Aorta (tissue), 5 donors: ENCODE measurements at regions of chr1 and their contacts with region 1.

Region 1: DNA sequence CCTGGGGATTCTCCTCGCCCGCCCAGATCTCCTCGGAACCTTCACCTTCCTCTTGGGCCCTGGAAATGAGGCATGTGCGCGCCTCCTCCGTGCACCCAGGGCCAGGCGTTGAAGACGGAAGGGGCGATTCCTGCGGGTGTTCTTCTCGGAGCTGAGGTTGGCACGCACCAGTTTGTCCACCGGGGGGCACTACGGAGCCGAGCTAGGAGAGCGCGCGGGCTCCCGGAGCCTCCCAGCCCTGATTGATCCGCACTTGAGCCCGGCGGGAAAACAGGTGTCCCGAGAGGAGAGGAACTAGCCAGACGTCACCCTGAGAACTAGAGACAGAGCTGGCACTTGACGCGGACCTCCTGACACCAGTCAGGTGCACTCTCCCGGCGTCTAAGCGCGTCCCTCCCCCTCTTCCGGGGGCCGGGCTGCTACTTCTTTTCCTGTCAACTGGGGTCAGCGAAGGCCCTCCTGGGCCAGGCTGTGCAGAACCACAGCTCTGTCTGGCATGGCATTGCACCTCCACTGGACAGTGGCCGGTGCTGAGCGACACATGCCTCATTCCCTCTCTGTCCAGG is 18.3 kb upstream of the SERINC2 start:
- DNase-seq: peak; percentile 88 to 96
- ATAC-seq: peak; percentile 93
- H3K4me3 ChIP-seq: peak overlapping the region in 1 of 2 donors; percentile 34
- H3K27ac ChIP-seq: no peak overlapping the region
- H3K4me1 ChIP-seq: no peaks in the 10 kb centered on the region
- H3K27me3 ChIP-seq: no peaks in the 10 kb centered on the region

Region 2: DNA sequence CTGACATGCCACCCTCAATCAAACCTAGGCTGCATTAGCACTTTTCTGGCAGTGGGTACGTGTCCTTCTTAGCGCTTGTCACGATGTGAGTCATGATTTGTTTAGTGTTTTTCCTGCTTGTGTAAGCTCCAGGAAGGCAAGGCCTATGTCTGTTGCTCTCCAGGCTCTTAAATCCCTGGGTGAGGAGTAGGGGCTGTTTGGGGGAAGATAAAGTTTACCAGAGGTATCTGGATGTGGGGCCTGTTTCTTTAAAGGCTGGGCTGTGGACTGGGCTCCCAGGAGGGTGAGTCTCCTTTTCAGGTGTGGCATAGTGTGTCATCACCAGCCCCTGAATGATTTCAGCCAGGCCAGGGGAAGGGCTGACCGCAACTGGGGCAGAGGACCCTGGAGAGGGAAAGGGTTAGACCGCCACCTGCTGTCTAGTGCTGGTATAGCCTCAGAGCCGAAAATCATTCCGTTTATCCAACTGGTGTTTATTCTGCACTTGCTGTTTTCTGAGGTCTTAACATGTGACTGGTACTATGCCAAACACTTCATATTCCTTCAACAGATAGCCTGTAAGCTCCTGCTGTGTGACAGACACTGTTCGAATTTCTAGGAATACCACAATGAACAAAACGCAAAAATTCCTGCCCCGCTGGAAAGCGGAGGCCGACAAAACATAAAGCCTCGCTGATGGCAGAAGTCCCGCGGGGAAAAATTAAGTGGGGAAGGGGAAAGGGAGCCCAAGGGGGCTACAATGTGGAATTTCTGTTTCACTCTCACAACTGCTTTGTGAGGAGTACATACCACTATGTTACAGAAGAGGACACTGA is 28.0 kb after region 1 on chr1:
- intact Hi-C with region 1: loop called in 1 of 2 experiments (anchors 1 kb)
- DNase-seq: peak; percentile 72 to 87
- ATAC-seq: peak; percentile 82
- H3K4me3 ChIP-seq: no peak overlapping the region
- H3K27ac ChIP-seq: no peak overlapping the region
- H3K4me1 ChIP-seq: no peaks in the 10 kb centered on the region
- H3K27me3 ChIP-seq: no peaks in the 10 kb centered on the region

Region 3: GRCh38 chr1:31548907-31549808 is 154.4 kb after region 1 on chr1:
- intact Hi-C with region 1: loop called in 1 of 2 experiments (anchors 5 kb)
- DNase-seq: peak; percentile 89 to 91
- ATAC-seq: peak; percentile 94
- H3K4me3 ChIP-seq: no peak overlapping the region
- H3K27ac ChIP-seq: no peak overlapping the region
- H3K4me1 ChIP-seq: no peaks in the 10 kb centered on the region
- H3K27me3 ChIP-seq: no peaks in the 10 kb centered on the region